PC-9 (cell line): ENCODE measurements at regions of chr1 and their contacts with region 1.

Region 1: DNA sequence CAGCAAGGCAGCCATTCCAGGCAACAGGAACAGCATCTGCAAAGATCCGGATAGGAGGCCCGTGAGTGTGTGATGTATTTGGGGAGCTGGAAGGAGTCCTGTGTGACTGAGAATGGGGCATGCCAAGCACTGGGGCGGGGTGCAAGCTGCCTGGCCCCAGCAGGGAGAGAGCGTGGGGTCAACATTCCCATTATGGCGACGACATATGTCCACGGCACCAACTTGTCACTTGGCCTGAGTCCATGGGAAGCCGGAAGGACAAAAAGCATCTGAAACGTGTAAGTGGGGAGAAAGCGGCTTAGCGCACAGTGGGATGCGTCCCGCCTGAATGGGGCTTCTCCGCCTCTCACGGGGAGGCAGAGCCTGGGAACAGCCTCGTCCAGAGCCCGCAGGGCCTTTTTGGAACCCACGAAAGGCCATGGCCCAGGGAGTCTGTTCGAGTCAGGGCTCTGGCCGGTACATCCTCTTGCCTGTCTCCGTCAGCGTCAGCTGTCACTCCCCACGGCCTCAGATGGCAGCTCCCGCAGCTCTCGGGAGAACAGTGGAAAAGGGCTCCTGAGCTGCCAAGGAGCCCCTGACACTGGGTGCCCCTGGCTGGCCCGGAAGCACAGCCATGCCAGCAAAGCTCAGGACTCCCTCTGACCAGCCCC is 12.4 kb downstream of the EPHB2 start:
- DNase-seq: no peak
- H3K4me3 ChIP-seq: no peak overlapping the region
- H3K27ac ChIP-seq: no peak overlapping the region
- H3K4me1 ChIP-seq: no peaks in the 10 kb centered on the region
- H3K27me3 ChIP-seq: no peaks in the 10 kb centered on the region
- CTCF ChIP-seq: no peak

Region 2: GRCh38 chr1:22780696-22781095 is 57.7 kb after region 1 on chr1:
- CTCF ChIA-PET with region 1: interaction called, 16 read pairs
- POLR2A ChIA-PET with region 1: no interaction called
- intact Hi-C with region 1: no loop called
- DNase-seq: peak in 1 of 2 experiments; percentile 33
- H3K4me3 ChIP-seq: no peak overlapping the region
- H3K27ac ChIP-seq: no peak overlapping the region
- H3K4me1 ChIP-seq: no peaks in the 10 kb centered on the region
- H3K27me3 ChIP-seq: no peaks in the 10 kb centered on the region
- CTCF ChIP-seq: no peak